ENCODE measurements at regions of chrX and their contacts with region 1.

Region 1: DNA sequence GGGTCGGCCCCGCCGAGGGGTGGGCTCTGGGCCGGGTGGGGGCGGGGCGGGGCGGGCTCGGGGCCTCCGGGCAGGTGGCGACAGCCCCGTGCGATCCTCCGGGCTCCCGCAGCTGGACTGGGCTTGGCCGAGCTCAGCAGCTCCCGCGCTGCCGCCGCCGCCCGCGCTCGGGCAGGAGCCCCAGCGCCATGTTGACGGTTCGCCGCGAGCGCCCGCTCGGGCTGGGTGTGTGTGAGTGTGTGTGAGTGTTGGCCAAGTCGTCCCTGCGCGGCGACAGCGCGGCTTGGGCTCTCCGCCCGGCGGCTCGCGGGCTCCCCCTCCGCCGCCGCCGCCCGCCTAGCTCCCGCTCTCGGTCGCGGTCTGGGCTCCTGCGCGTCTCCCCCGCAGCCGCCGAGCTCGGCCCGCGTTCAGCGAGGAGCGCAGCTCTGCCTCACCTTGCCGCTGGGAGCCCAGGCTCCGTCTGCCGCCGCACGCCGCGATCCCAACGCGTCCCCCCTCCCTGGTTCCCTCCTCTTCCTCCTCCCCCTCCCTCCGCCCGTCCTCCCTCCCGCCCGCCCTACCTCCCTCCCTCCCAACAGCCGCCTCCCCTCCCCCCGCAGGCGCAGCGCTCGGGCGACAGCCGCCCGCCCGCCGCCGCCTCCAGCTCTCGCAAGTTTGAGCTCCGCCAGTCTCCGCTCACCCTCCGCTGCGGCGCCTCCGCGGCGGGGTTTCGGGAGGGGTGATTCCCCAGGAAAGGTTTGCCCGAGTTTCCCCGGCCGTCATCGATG is at the start of gene BCOR:
- DNase-seq: no peak
- ATAC-seq: peak; percentile 44
- H3K4me3 ChIP-seq: peak within 1 kb of the TSS; percentile 54 to 61
- H3K27ac ChIP-seq: peak within 1 kb of the TSS; percentile 93
- H3K4me1 ChIP-seq: peaks cover 34 to 55% of the 10 kb centered on the region in 2 experiments
- H3K27me3 ChIP-seq: no peaks in the 10 kb centered on the region
- CTCF ChIP-seq: no peak
- POLR2A ChIP-seq: peak; percentile 72
- RAD21 ChIP-seq: no peak
- total RNA-seq, gene BCOR: 35.1 TPM

Region 2: DNA sequence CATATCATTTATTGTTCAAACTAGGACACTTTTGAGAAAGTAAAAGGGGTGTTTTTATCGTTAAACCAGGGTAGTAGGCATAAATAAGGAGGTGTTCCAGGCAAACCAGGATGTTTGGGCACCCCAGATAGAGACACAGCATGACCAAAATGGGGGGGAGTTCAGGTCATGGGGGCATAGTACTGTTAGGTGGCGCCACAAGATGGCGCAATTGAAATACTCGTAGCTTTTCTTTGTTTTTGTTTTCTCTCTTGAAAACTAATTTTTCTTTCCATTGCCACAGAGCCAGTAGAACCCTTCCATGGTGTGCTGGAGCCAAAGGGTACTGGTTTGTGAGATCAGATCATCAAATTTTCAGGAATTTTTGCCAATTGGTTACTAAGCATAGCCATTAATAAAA is 283.3 kb before region 1 on chrX:
- CTCF ChIA-PET with region 1: no interaction called
- POLR2A ChIA-PET with region 1: interaction called, 3 read pairs
- RAD21 ChIA-PET with region 1: no interaction called
- intact Hi-C with region 1: loop called (anchors 10 kb)
- DNase-seq: peak; percentile 15
- ATAC-seq: peak; percentile 73
- H3K4me3 ChIP-seq: no peak overlapping the region
- H3K27ac ChIP-seq: no peak overlapping the region
- H3K4me1 ChIP-seq: no peaks in the 10 kb centered on the region
- H3K27me3 ChIP-seq: no peaks in the 10 kb centered on the region
- CTCF ChIP-seq: peak; percentile 45 to 55 (median 48); a peak in 5 of 6 replicates
- POLR2A ChIP-seq: no peak
- RAD21 ChIP-seq: peak; percentile 78

Region 3: GRCh38 chrX:40169193-40170101 is 71.8 kb after region 1 on chrX:
- CTCF ChIA-PET with region 1: interaction called, 7 read pairs
- POLR2A ChIA-PET with region 1: interaction called, 19 read pairs
- RAD21 ChIA-PET with region 1: interaction called in 1 of 2 experiments, 3 read pairs
- intact Hi-C with region 1: loop called (anchors 2 kb)
- DNase-seq: peak; percentile 78
- ATAC-seq: peak; percentile 33
- H3K4me3 ChIP-seq: peak overlapping the region; percentile 20 to 29
- H3K27ac ChIP-seq: peak overlapping the region; percentile 98
- H3K4me1 ChIP-seq: peaks cover 60 to 97% of the 10 kb centered on the region in 2 experiments
- H3K27me3 ChIP-seq: no peaks in the 10 kb centered on the region
- CTCF ChIP-seq: peak in 2 of 3 experiments; percentile 54 to 63; a peak in 4 of 6 replicates
- POLR2A ChIP-seq: no peak
- RAD21 ChIP-seq: no peak

Region 4: GRCh38 chrX:40175511-40176350 is 78.1 kb after region 1 on chrX:
- CTCF ChIA-PET with region 1: no interaction called
- POLR2A ChIA-PET with region 1: interaction called, 10 read pairs
- RAD21 ChIA-PET with region 1: no interaction called
- intact Hi-C with region 1: loop called (anchors 2 kb)
- DNase-seq: no peak
- ATAC-seq: peak; percentile 17
- H3K4me3 ChIP-seq: peak overlapping the region; percentile 48 to 60
- H3K27ac ChIP-seq: peak overlapping the region; percentile 98
- H3K4me1 ChIP-seq: peaks cover 20 to 62% of the 10 kb centered on the region in 2 experiments
- H3K27me3 ChIP-seq: no peaks in the 10 kb centered on the region
- CTCF ChIP-seq: no peak
- POLR2A ChIP-seq: peak; percentile 5
- RAD21 ChIP-seq: no peak

Region 5: DNA sequence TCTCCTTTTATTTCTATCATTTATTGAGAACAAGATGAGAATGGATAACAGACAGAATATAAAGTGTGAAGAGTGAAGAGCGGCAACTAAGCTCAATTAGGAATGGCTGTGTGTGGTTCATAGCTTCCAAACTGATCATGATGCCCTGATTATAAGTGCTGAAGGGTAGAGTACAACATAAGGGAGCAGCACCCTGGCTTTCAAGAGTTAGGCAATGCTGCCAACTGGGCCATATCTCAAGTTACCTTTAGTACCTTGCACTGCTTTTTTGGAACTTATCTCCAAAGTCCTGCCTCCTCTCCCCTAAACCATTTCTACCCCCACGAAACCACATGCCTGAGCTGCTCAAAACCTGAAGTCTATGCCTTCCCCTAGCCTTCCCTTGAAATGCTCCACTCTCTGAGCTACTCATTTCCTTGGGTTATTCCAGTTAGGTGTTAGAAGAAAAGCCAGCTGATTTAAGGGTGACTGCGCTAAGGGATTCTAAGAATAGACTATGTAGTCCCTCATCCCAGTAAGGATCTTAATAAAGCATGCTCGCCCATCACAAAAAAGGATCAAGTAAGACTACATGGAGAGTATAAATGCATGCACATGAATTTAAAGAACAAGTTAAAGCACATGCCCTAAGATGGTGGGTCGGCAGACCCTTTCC is 608.1 kb after region 1 on chrX:
- CTCF ChIA-PET with region 1: no interaction called
- POLR2A ChIA-PET with region 1: no interaction called
- RAD21 ChIA-PET with region 1: no interaction called
- intact Hi-C with region 1: no loop called
- DNase-seq: no peak
- ATAC-seq: no peak
- H3K4me3 ChIP-seq: no peak overlapping the region
- H3K27ac ChIP-seq: no peak overlapping the region
- H3K4me1 ChIP-seq: no peaks in the 10 kb centered on the region
- H3K27me3 ChIP-seq: no peaks in the 10 kb centered on the region
- CTCF ChIP-seq: no peak
- POLR2A ChIP-seq: no peak
- RAD21 ChIP-seq: no peak